Activated CD4-positive, alpha-beta memory T cell treated with anti-CD3 and anti-CD28 coated beads, Interleukin-2, amount 10 ng/mL, durations not matched to agents 7 days and 5 days (primary cell): ENCODE measurements at regions of chr11 and their contacts with region 1.

Region 1: DNA sequence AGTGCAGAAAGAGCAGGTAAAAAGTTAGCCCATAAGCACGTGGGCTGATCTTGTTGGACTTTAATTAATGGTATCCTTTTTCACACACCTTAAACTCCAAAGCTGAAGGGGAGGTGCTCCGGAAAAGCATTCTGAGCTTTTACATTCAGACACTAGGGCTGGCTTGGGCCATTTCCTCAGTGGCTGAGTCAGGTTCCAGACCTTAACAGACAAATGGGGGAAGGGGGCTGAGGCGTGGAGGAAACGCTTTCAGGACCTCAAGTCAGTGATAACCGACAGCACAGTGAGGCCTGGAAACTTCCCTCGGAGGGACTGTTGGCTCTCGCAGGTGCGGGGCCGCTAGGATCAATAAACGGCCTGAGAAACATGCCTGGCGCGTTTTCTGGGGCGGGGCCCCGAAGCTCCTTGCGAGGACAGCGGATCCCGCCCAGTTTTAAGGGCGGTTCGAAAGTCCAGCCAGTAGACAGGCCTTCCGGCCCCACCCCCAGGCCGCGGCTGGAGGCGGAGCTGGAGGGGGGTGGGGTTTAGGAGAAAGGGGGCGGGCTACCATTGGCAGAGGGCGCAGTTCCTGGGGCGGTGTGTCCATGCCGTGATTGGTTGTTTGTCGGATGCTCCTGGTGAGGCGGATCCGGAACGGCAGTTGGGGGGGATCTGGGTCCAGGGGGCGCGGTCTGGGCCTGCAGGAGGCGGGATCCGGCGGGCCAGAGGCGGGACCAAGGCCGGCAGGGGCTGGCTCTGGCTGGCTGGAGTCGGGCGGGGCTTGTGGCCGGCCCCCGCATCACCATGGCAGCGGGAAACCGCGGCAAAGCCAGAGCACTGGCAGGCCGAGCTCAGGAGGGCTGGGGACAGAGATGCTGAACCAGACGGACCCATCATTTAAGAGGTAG is 8.0 kb downstream of the C11orf52 start:
- DNase-seq: peak; percentile 97
- H3K4me3 Mint-ChIP-seq: peak overlapping the region; percentile 80
- H3K27ac Mint-ChIP-seq: peak overlapping the region; percentile 78
- H3K4me1 Mint-ChIP-seq: peaks cover 19% of the 10 kb centered on the region
- H3K27me3 Mint-ChIP-seq: peaks cover 14% of the 10 kb centered on the region

Region 2: DNA sequence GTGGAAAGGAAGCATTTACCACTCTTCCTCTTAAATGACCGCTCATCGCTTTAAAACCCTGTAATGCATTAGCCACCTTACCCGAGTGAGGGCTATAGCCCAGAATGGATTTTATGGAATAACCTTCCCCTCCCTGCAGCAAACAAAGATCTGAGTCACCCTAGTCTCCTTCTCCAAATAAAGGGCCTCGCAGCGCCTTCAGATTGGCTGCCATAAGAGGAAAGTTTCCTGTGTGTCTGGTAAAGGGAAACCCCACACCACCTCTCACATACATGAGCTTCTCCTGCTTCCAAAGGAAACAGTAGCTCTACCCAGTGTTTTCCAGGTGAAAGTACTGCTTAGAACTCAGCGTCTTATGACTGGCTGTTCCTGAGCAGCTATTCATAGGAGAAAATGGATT is 208.3 kb before region 1 on chr11:
- CTCF ChIA-PET with region 1: no interaction called
- POLR2A ChIA-PET with region 1: no interaction called
- DNase-seq: no peak
- H3K4me3 Mint-ChIP-seq: no peak overlapping the region
- H3K27ac Mint-ChIP-seq: no peak overlapping the region
- H3K4me1 Mint-ChIP-seq: peaks cover 9% of the 10 kb centered on the region
- H3K27me3 Mint-ChIP-seq: no peaks in the 10 kb centered on the region

Region 3: DNA sequence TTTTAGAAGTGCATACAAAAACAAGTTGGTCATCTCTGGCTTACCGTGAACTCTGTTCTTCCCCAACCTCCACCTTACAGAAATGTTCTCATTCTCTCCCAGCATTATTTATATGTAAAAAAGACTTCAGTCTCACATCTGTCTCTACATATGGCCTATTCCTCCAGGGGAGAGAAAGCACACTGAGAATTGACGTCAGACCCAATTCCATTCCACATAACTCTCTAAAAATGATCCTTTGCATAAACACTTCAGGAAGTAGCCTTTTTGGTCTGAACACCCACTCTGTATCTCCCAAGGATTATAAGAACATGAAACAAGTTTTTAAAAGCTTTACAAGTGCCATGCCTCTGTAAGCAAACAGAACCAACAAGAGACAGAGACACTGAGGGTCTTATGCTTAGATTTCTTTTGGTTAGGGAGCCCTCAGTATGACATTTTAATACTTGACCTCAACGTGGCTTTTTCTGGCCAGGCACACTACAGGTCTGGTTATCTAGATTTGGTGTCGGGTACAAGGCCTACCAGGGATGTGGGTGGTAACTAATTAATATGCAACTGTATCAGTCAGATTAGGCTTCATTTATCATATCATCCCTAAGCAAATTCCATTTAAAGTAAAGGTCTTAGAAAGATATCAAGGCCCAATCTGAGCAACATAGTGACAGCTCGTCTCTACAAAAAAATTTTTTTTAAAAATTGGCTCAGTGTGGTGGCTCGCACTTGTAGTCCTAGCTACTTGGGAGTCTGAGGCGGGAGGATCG is 112.0 kb before region 1 on chr11:
- CTCF ChIA-PET with region 1: no interaction called
- POLR2A ChIA-PET with region 1: no interaction called
- DNase-seq: no peak
- H3K4me3 Mint-ChIP-seq: no peak overlapping the region
- H3K27ac Mint-ChIP-seq: no peak overlapping the region
- H3K4me1 Mint-ChIP-seq: no peaks in the 10 kb centered on the region
- H3K27me3 Mint-ChIP-seq: no peaks in the 10 kb centered on the region

Region 4: DNA sequence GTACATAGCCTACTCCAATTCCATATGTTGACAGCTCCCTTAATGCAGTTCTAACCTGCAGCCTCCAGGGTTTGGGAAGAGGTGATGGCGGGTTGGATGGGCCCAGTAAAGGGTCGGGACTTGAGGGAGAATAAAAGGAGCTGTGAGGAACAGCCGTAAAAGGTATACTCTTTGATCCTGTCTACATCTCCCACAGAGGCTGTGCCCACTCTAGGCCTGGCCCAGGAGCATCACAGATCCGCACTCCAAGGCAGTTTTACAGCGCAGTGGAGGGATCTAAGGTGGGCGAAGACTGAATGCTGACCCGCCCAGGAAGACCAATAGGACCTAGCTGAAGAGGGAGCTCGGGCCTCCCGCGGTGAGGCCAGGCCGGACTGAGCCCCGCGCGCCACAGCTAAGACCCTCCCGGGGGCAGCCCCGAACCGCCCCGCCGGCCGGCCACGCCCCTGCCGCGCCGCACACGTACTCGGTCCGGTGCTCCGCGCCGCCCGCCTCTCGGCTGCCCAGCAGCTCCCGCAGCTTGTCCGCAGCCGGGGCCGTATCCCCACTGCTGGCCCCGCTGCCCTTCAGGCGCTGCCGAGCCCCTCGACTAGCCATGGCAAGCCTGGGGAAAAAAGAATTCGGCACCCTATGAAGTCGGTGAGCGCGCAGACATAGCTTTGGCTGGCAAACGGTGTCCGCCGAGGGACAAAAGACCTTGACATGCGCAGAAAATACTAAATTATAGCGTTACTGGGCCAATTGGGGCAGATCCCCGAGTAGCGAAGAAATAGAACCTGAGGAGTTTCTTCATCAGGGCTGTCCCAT is 55.7 kb before region 1 on chr11 and contains the start of gene ALG9:
- CTCF ChIA-PET with region 1: interaction called, 16 read pairs
- POLR2A ChIA-PET with region 1: interaction called, 23 read pairs
- DNase-seq: peak; percentile 89
- H3K4me3 Mint-ChIP-seq: peak within 1 kb of the TSS; percentile 91
- H3K27ac Mint-ChIP-seq: peak within 1 kb of the TSS; percentile 85
- H3K4me1 Mint-ChIP-seq: peaks cover 32% of the 10 kb centered on the region
- H3K27me3 Mint-ChIP-seq: no peaks in the 10 kb centered on the region
- total RNA-seq, gene ALG9: 24.8 to 25.0 TPM

Region 5: GRCh38 chr11:111938687-111939160 is 12.0 kb after region 1 on chr11:
- CTCF ChIA-PET with region 1: interaction called, 20 read pairs
- POLR2A ChIA-PET with region 1: interaction called, 39 read pairs
- DNase-seq: peak; percentile 41
- H3K4me3 Mint-ChIP-seq: peak overlapping the region; percentile 85
- H3K27ac Mint-ChIP-seq: peak overlapping the region; percentile 60
- H3K4me1 Mint-ChIP-seq: peaks cover 43% of the 10 kb centered on the region
- H3K27me3 Mint-ChIP-seq: no peaks in the 10 kb centered on the region

Region 6: GRCh38 chr11:111944651-111945051 is 17.9 kb after region 1 on chr11:
- CTCF ChIA-PET with region 1: interaction called, 20 read pairs
- POLR2A ChIA-PET with region 1: interaction called, 39 read pairs
- DNase-seq: no peak
- H3K4me3 Mint-ChIP-seq: no peak overlapping the region
- H3K27ac Mint-ChIP-seq: peak overlapping the region; percentile 69
- H3K4me1 Mint-ChIP-seq: peaks cover 22% of the 10 kb centered on the region
- H3K27me3 Mint-ChIP-seq: no peaks in the 10 kb centered on the region

Region 7: DNA sequence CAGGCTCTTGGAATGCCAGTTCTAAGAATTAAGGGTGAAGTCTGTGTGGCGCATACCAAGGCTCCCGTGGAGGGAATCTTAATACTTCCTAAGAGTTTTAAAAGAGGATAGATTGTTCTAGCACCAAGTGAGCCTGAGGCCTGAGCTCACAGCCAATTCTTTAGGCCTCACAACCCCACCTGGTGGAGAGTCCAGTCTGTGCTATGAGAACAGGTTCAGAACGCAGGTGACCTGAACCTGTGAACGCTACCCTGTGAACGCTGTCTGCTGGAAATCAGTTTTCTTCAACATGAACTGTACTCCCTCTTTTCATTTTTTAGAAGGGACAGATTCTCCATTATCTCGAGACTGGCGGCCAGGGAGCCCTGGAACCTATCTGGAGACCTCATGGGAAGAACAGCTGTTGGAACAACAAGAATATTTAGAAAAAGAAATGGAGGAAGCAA is 55.3 kb after region 1 on chr11:
- CTCF ChIA-PET with region 1: interaction called, 178 read pairs
- POLR2A ChIA-PET with region 1: interaction called, 12 read pairs
- DNase-seq: peak; percentile 61
- H3K4me3 Mint-ChIP-seq: no peak overlapping the region
- H3K27ac Mint-ChIP-seq: no peak overlapping the region
- H3K4me1 Mint-ChIP-seq: peaks cover 7% of the 10 kb centered on the region
- H3K27me3 Mint-ChIP-seq: peaks cover 2% of the 10 kb centered on the region